Activated CD4-positive, alpha-beta T cell treated with anti-CD3 and anti-CD28 coated beads, Interleukin-2, amount 10 ng/mL, durations not matched to agents 24 days and 14 days (primary cell): ENCODE measurements at regions of chr2 and their contacts with region 1.

Region 1: DNA sequence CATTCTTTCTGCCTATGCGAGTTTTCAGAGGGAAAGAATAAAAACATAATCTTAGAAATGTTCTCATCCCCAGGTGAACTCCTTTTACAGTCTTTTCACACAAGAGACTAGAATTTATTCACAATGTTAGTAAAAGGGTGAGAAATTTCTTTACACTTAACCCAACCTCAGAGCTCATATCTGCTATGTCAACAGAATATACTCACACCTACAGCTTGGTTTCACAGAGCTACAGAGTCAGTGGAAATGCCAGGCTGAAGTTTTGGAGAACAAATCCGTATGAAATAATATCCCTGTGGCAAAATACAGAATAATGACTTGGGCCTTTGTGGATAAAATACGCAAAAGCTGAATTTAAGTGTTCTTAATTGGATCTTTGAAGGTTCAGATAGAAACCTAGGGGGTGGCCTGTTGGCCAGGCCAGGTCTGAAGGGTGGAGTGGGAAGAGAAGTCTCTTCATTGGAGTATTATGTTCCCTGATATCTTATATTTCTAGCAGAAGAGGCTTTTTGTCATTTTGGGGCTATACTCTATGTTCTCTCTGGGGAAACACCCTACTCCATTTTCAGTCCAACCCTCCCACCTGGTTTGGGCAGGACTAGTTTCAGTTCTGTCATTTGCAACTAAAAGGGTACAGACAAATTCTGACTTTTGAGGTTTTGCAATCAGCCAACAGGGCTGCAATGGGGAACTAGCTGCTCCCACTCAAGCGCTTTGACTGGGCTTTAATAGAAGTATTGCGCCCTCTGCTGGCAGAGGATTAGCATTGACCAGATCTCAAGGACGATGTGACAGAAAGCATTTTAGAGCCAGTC is 25.7 kb downstream of the FBXO48 start:
- DNase-seq: peak; percentile 94
- H3K4me3 Mint-ChIP-seq: peak overlapping the region; percentile 49
- H3K27ac Mint-ChIP-seq: peak overlapping the region; percentile 46
- H3K4me1 Mint-ChIP-seq: peaks cover 23% of the 10 kb centered on the region
- H3K27me3 Mint-ChIP-seq: peaks cover 17% of the 10 kb centered on the region

Region 2: DNA sequence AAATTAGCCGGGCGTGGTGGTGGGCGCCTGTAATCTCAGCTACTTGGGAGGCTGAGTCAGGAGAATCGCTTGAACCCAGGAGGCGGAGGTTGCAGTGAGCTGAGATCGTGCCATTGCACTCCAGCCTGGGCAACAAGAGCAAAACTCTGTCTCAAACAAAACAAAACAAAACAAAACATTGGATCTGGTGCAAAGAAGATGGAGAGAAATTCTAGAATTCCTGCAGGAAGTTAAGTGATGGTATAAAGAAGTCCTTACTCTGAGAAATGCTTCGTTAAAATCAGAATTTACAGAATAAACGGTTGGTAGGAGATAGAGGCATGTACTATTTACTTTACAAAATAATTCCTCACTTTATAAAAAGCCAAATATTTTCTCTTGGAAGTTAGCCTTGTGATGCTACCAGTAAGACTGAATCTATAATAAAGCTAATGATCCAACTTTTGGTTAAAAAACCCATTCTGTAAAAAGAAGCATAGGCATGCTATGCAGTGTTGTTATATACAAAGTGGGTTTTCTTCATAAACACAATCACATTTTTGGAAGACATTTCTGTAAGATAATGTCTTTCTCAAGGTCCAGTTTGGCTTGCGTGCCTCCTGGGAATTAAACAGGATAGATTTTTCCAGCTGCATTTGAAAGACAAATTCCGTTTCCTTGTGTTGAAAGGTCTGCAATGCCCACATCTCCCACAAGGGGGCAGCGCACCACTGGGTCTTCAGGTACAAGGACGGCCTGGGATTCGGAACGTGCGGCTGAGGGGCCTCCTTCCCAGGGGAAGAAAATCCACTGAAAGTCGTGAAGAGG is 319.3 kb before region 1 on chr2:
- intact Hi-C with region 1: loop called (anchors 5 kb)
- DNase-seq: peak; percentile 92
- H3K4me3 Mint-ChIP-seq: no peak overlapping the region
- H3K27ac Mint-ChIP-seq: no peak overlapping the region
- H3K4me1 Mint-ChIP-seq: peaks cover 4% of the 10 kb centered on the region
- H3K27me3 Mint-ChIP-seq: peaks cover 2% of the 10 kb centered on the region

Region 3: GRCh38 chr2:68203587-68203986 is 237.8 kb before region 1 on chr2:
- intact Hi-C with region 1: loop called (anchors 5 kb)
- DNase-seq: peak; percentile 68
- H3K4me3 Mint-ChIP-seq: peak overlapping the region; percentile 64
- H3K27ac Mint-ChIP-seq: peak overlapping the region; percentile 86
- H3K4me1 Mint-ChIP-seq: peaks cover 50% of the 10 kb centered on the region
- H3K27me3 Mint-ChIP-seq: no peaks in the 10 kb centered on the region

Region 4: DNA sequence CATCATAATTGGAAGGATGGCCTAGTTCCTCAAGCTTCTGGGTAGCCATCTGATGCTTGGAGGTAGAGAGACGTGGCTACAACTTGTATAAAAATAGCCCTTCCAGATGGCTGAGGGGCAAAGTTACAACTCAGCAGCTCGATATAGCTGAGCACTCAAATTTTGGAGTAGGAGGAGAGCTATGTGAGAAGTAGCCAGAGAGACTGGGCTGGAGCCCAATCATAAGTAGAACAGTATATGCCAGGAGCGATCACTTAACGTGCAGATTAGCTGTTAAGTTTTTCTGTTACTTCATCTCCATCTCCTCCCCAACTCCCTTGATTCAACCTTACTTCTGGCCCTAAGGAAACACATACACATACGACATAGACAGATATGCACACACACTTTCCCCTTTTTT is 150.5 kb before region 1 on chr2:
- intact Hi-C with region 1: loop called (anchors 5 kb)
- DNase-seq: no peak
- H3K4me3 Mint-ChIP-seq: no peak overlapping the region
- H3K27ac Mint-ChIP-seq: no peak overlapping the region
- H3K4me1 Mint-ChIP-seq: no peaks in the 10 kb centered on the region
- H3K27me3 Mint-ChIP-seq: peaks cover 35% of the 10 kb centered on the region

Region 5: GRCh38 chr2:68319398-68320117 is 121.8 kb before region 1 on chr2 and contains the start of gene CNRIP1:
- intact Hi-C with region 1: no loop called
- DNase-seq: no peak
- H3K4me3 Mint-ChIP-seq: peak within 1 kb of the TSS; percentile 41
- H3K27ac Mint-ChIP-seq: no peak within 1 kb of the TSS
- H3K4me1 Mint-ChIP-seq: peaks cover 2% of the 10 kb centered on the region
- H3K27me3 Mint-ChIP-seq: peaks cover 67% of the 10 kb centered on the region
- total RNA-seq, gene CNRIP1: not detected in 2 replicates

Region 6: DNA sequence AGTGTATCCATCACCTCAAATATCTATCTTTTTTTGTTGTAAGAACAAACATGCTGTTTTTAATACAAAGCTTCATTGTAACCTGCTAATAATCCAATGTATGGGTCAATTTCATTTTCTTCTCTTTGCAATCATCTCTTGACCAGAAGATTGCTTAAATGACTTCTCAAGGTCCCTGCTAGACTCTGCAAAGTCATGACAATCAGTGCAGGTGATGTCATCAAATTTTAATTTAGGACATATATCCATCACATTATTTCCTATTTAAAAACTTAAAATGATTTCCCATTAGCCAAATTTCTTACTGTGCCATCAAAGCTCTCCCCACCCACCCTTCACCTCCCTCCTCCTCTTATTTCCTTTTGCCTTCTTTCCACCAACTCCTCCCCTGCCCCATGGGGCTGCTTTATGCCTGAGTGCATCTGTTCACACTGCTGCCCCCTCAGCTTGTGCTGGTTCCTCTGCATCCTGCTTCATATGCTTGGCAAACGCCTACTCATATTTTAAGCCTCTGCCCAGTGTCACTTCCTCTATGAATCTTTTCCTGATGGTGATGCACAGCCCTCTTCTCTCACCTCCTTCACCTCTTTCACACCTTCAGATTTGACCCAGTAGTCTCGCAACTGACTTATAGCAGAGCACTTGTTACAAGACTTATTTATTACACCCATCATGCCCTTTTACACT is 56.0 kb before region 1 on chr2:
- intact Hi-C with region 1: loop called (anchors 1 kb)
- DNase-seq: peak; percentile 63
- H3K4me3 Mint-ChIP-seq: peak overlapping the region; percentile 10
- H3K27ac Mint-ChIP-seq: peak overlapping the region; percentile 45
- H3K4me1 Mint-ChIP-seq: peaks cover 38% of the 10 kb centered on the region
- H3K27me3 Mint-ChIP-seq: peaks cover 12% of the 10 kb centered on the region

Region 7: DNA sequence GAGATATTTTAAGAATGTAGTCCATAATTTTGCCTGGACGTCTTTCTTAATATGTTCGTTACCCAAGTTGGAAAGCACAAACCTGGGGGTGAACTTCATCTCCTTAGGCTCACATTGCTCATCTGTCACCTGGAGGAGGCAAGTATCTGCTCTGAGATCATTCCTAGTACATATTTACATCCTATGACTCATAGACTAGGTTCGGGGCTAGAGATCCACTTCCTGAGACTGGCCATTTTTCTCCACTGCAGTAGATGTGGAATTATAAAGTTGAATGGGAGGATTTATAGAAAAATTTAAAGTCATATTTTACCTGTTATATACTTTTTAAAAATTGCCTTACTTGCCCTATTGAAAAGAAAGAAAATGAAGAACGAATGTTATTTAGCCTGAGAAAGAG is 124.5 kb after region 1 on chr2:
- intact Hi-C with region 1: no loop called
- DNase-seq: no peak
- H3K4me3 Mint-ChIP-seq: no peak overlapping the region
- H3K27ac Mint-ChIP-seq: no peak overlapping the region
- H3K4me1 Mint-ChIP-seq: no peaks in the 10 kb centered on the region
- H3K27me3 Mint-ChIP-seq: peaks cover 8% of the 10 kb centered on the region